ENCODE measurements at regions of chr22 and their contacts with region 1.

Region 1: DNA sequence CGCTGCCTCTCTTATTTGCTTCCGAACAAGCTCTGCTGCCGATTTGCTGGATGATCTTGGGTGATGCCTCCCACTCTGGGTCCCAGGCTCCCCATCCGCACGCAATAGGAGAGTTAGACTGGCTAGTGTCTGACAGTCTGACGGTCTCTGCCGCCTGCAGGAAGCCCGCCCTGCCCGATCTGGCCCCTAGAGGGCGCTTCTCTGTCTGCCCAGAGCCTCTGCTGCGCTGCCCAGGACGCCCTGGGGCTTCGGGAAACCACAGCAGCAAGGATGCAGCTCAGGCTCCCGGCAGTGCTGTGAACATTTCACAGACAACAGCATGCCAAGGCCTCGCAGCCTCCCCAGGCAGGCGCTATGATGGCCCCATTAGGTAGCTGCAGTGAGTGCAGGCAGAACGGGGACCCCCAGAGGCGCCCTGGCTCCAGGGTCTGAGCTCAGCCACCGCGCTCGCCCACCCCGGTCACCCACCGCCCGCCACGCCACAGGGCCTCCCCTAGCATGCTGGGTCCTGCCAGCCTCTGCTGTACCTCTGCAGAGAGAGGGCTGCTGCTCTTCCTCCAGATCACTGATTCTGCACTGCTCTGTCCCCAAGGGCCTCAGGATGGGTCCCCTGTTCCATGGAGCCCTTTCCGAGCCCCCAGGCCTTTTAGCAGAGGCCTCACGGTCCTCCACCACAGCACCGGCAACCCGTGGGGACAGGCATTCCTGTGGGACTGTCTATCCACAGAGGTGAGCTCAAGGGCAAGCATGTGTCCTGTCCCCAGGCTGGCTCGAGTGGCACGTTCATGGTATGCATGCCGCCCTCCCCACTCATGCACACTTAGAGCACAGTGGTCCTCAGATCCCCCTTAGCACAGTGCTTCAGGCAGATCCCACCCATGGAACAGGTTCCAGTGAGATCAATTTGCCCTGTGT is 4.3 kb upstream of the BAIAP2L2 start:
- DNase-seq: peak; percentile 50 to 83 (median 71)
- ATAC-seq: peak; percentile 95
- H3K4me3 ChIP-seq: no peak overlapping the region
- H3K4me3 Mint-ChIP-seq: no peak overlapping the region
- H3K27ac ChIP-seq: no peak overlapping the region
- H3K27ac Mint-ChIP-seq: no peak overlapping the region
- H3K4me1 ChIP-seq: peaks cover 8% of the 10 kb centered on the region
- H3K4me1 Mint-ChIP-seq: peaks cover 4% of the 10 kb centered on the region
- H3K27me3 ChIP-seq: no peaks in the 10 kb centered on the region
- H3K27me3 Mint-ChIP-seq: no peaks in the 10 kb centered on the region
- CTCF ChIP-seq: peak; percentile 90

Region 2: DNA sequence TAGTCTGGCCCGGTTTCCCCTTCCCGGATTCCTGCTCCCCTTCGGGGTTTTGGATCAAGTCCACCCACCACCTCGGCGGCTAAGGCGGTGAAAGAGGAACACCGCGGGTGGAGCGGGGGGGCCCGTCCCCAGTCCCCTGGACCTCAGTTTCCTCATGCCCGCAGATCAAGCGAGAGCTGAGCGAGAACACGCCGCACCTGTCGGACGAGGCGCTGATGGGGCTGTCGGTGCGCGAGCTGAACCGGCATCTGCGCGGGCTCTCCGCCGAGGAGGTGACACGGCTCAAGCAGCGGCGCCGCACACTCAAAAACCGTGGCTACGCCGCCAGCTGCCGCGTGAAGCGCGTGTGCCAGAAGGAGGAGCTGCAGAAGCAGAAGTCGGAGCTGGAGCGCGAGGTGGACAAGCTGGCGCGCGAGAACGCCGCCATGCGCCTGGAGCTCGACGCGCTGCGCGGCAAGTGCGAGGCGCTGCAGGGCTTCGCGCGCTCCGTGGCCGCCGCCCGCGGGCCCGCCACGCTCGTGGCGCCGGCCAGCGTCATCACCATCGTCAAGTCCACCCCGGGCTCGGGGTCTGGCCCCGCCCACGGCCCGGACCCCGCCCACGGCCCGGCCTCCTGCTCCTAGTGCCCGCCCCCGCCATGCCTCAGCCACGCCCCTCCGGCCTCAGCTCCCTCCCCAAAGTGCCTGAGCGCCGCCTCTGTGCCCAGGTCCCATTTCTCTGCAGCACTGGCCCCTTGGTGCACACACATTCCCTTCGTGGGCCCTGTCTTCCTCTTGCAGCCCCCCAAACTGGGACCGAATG is 99.7 kb after region 1 on chr22:
- CTCF ChIA-PET with region 1: no interaction called
- POLR2A ChIA-PET with region 1: no interaction called
- intact Hi-C with region 1: loop called in 1 of 2 experiments (anchors 10 kb)
- DNase-seq: peak; percentile 51 to 90 (median 72)
- ATAC-seq: peak; percentile 82
- H3K4me3 ChIP-seq: peak overlapping the region; percentile 51
- H3K4me3 Mint-ChIP-seq: peak overlapping the region; percentile 45
- H3K27ac ChIP-seq: no peak overlapping the region
- H3K27ac Mint-ChIP-seq: peak overlapping the region; percentile 55
- H3K4me1 ChIP-seq: peaks cover 34% of the 10 kb centered on the region
- H3K4me1 Mint-ChIP-seq: peaks cover 29% of the 10 kb centered on the region
- H3K27me3 ChIP-seq: no peaks in the 10 kb centered on the region
- H3K27me3 Mint-ChIP-seq: no peaks in the 10 kb centered on the region
- CTCF ChIP-seq: no peak

Region 3: GRCh38 chr22:38230108-38230825 is 115.5 kb after region 1 on chr22:
- CTCF ChIA-PET with region 1: no interaction called
- POLR2A ChIA-PET with region 1: no interaction called
- intact Hi-C with region 1: loop called in 1 of 2 experiments (anchors 5 kb)
- DNase-seq: peak in 12 of 14 experiments; percentile 13 to 70 (median 30)
- ATAC-seq: peak; percentile 45
- H3K4me3 ChIP-seq: no peak overlapping the region
- H3K4me3 Mint-ChIP-seq: no peak overlapping the region
- H3K27ac ChIP-seq: no peak overlapping the region
- H3K27ac Mint-ChIP-seq: peak overlapping the region; percentile 30
- H3K4me1 ChIP-seq: peaks cover 26% of the 10 kb centered on the region
- H3K4me1 Mint-ChIP-seq: peaks cover 5% of the 10 kb centered on the region
- H3K27me3 ChIP-seq: no peaks in the 10 kb centered on the region
- H3K27me3 Mint-ChIP-seq: no peaks in the 10 kb centered on the region
- CTCF ChIP-seq: peak; percentile 15

Measured in CD4-positive, alpha-beta T cell (primary cell).